ENCODE measurements at regions of chr13 and their contacts with region 1.

Region 1: GRCh38 chr13:85806553-85807175 is 7.4 kb upstream of the SLITRK6 start:
- DNase-seq: no peak
- ATAC-seq: peak in 3 of 4 donors; percentile 67 to 72 (median 67)
- H3K4me3 ChIP-seq: no peak overlapping the region
- H3K27ac ChIP-seq: no peak overlapping the region
- H3K4me1 ChIP-seq: no peaks in the 10 kb centered on the region
- H3K27me3 ChIP-seq: no peaks in the 10 kb centered on the region
- CTCF ChIP-seq: peak in 3 of 4 donors; percentile 16 to 56 (median 44)

Region 2: DNA sequence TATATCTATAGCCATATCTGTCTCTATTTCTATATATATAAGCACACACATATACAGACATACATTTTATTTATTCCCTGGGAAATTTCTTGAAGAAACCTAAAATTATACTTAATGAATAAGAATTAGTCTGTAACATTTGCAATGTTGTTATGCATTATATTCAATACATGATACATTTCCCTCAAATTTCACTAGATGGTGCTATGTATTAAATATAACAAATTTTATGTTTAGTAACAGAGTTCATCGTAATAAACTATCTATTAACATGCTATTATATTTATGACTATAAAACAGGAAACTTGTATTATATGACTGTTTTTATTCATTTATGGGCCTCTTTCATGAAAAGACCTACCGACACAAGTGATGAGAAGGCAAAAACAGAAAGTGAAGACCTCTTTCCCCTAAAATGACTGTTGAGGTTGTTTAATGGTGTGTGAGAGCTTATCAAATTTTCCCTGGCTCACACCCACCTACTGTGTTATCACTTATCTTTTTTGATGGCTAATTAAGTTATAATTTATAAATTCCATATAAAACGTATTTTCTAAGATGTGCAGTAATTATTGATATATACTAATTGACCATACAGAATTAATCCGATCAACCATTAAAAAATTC is 889.3 kb before region 1 on chr13:
- intact Hi-C with region 1: loop called in 1 of 3 experiments (anchors 5 kb)
- DNase-seq: no peak
- ATAC-seq: peak in 3 of 4 donors; percentile 47 to 67 (median 51)
- H3K4me3 ChIP-seq: no peak overlapping the region
- H3K27ac ChIP-seq: no peak overlapping the region
- H3K4me1 ChIP-seq: peaks cover 0 to 2% (median 0%) of the 10 kb centered on the region in 3 donors
- H3K27me3 ChIP-seq: no peaks in the 10 kb centered on the region
- CTCF ChIP-seq: peak in 1 of 4 donors; percentile 18

Region 3: DNA sequence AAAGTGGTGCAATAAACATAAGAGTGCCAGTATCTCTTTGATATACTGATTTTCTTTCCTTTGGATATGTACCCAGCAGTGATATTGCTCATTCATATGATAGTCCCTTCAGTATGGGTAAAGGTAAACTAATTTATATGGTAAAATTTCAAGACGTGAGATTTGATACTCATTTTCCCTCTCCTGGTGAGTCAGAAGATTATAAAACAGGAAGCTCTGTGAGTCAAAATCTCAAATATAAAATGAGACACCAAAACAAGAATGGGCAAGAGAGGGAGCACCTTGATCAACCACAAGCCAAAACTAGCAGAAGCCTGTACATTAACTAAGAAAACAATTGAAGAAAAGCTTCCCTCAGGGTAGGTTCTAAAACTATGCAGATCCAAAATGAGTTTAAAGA is 223.8 kb before region 1 on chr13:
- intact Hi-C with region 1: no loop called
- DNase-seq: no peak
- ATAC-seq: no peak
- H3K4me3 ChIP-seq: no peak overlapping the region
- H3K27ac ChIP-seq: no peak overlapping the region
- H3K4me1 ChIP-seq: no peaks in the 10 kb centered on the region
- H3K27me3 ChIP-seq: no peaks in the 10 kb centered on the region
- CTCF ChIP-seq: no peak

Measured in pancreas (tissue), 10 donors.